Keratinocyte (primary cell): ENCODE measurements at regions of chr4 and their contacts with region 1.

Region 1: GRCh38 chr4:94757192-94758139 is at the start of gene BMPR1B:
- DNase-seq: no peak
- H3K4me3 ChIP-seq: peak within 1 kb of the TSS; percentile 49 to 72 (median 70)
- H3K27ac ChIP-seq: no peak within 1 kb of the TSS
- H3K4me1 ChIP-seq: peaks cover 3% of the 10 kb centered on the region
- H3K27me3 ChIP-seq: peaks cover 7% of the 10 kb centered on the region
- CTCF ChIP-seq: peak in 2 of 3 experiments; percentile 19 to 22
- polyA plus RNA-seq, gene BMPR1B: 0.86 to 1.0 TPM (median 0.89 TPM) in 3 replicates

Region 2: GRCh38 chr4:95124906-95125504 is 367.5 kb after region 1 on chr4:
- dilution Hi-C with region 1: loop called (anchors 25 kb)
- DNase-seq: peak; percentile 9
- H3K4me3 ChIP-seq: no peak overlapping the region
- H3K27ac ChIP-seq: no peak overlapping the region
- H3K4me1 ChIP-seq: peaks cover 7% of the 10 kb centered on the region
- H3K27me3 ChIP-seq: no peaks in the 10 kb centered on the region
- CTCF ChIP-seq: peak; percentile 46 to 56 (median 53)